Transverse colon (tissue), 4 donors: ENCODE measurements at regions of chr5 and their contacts with region 1.

Region 1: GRCh38 chr5:146049014-146049703 is 56.2 kb downstream of the PLAC8L1 start:
- DNase-seq: peak; percentile 65
- H3K4me3 ChIP-seq: no peak overlapping the region
- H3K27ac ChIP-seq: peak overlapping the region in 2 of 4 donors; percentile 21 to 32
- H3K4me1 ChIP-seq: peaks cover 0 to 27% (median 9%) of the 10 kb centered on the region in 4 donors
- H3K27me3 ChIP-seq: no peaks in the 10 kb centered on the region
- CTCF ChIP-seq: peak; percentile 49 to 74 (median 60)
- EP300 ChIP-seq: no peak
- POLR2A ChIP-seq: no peak

Region 2: GRCh38 chr5:144203750-144204596 is 1845.2 kb before region 1 on chr5:
- in situ Hi-C with region 1: loop called in 2 of 4 experiments (anchors 25 kb)
- intact Hi-C with region 1: loop called (anchors 5 kb)
- DNase-seq: peak; percentile 12
- H3K4me3 ChIP-seq: no peak overlapping the region
- H3K27ac ChIP-seq: no peak overlapping the region
- H3K4me1 ChIP-seq: peaks cover 0 to 10% (median 5%) of the 10 kb centered on the region in 4 donors
- H3K27me3 ChIP-seq: peaks cover 36% of the 10 kb centered on the region
- CTCF ChIP-seq: peak; percentile 79 to 88 (median 81)
- EP300 ChIP-seq: no peak
- POLR2A ChIP-seq: no peak

Region 3: GRCh38 chr5:145681686-145682085 is 367.5 kb before region 1 on chr5:
- in situ Hi-C with region 1: loop called in 2 of 4 experiments (anchors 25 kb)
- intact Hi-C with region 1: no loop called
- DNase-seq: peak; percentile 53
- H3K4me3 ChIP-seq: no peak overlapping the region
- H3K27ac ChIP-seq: peak overlapping the region in 2 of 4 donors; percentile 64 to 72
- H3K4me1 ChIP-seq: peaks cover 0 to 14% (median 7%) of the 10 kb centered on the region in 4 donors
- H3K27me3 ChIP-seq: no peaks in the 10 kb centered on the region
- CTCF ChIP-seq: peak; percentile 56 to 73 (median 61)
- EP300 ChIP-seq: no peak
- POLR2A ChIP-seq: no peak

Region 4: DNA sequence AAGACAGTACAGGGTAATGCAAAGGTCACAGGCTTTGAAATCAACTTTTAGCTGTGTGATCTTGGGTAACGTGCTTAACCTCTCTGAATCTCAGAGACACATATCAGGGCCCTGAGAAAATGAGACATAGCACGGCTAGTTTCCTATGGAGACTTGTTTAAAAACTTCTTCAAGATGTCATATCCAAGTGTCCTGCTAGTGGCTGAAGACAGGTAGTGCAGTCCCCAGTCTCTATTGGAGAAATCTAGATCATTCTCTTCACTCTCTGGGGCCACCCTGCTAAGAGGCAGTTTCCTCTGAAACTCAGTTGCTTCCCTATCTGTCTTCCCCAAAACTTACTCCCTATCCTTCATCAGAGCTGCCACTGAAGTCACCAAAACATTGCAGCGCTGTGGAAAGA is 146.0 kb before region 1 on chr5:
- in situ Hi-C with region 1: loop called in 2 of 4 experiments (anchors 10 to 25 kb)
- intact Hi-C with region 1: no loop called
- DNase-seq: no peak
- H3K4me3 ChIP-seq: no peak overlapping the region
- H3K27ac ChIP-seq: no peak overlapping the region
- H3K4me1 ChIP-seq: no peaks in the 10 kb centered on the region
- H3K27me3 ChIP-seq: no peaks in the 10 kb centered on the region
- CTCF ChIP-seq: peak; percentile 19 to 42 (median 31)
- EP300 ChIP-seq: no peak
- POLR2A ChIP-seq: no peak

Region 5: DNA sequence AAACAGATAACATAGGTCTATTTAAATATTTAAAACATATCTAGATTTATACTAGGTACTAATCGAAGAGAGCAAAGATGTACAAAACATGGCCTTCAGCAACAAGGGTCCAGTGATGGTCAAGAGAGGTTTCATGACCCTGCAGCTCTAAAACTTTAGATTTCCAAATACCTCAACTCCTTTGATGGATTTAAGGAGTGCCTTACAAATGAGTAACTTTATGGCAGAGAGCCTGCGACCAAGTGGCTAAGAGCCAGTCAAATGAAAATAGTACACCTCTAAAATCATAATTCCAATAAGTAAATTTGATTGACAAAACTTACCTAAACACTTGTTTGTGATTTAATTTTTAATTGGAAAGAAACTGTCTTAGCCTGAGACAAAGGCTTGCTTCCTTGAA is 117.4 kb before region 1 on chr5:
- in situ Hi-C with region 1: no loop called
- intact Hi-C with region 1: no loop called
- DNase-seq: no peak
- H3K4me3 ChIP-seq: no peak overlapping the region
- H3K27ac ChIP-seq: no peak overlapping the region
- H3K4me1 ChIP-seq: peaks cover 0 to 13% (median 9%) of the 10 kb centered on the region in 4 donors
- H3K27me3 ChIP-seq: no peaks in the 10 kb centered on the region
- CTCF ChIP-seq: no peak
- EP300 ChIP-seq: no peak
- POLR2A ChIP-seq: no peak

Region 6: DNA sequence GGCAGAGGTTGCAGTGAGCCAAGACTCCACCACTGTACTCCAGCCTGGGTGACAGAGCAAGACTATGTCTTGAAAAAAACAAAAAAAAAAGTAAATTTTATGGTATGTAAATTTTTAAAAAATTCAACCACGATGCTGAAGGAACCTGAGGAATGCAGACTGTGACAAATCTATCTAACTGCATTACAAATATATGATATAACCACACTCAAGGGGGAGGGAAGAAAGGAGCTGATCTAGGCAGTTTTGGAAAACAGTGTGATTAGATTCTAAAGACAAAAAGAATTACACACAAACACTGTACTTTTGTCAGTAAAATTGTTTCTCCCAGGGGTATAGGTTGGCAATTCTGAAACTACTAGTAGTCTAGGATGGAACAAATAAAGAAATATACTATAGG is 116.3 kb after region 1 on chr5:
- in situ Hi-C with region 1: no loop called
- intact Hi-C with region 1: no loop called
- DNase-seq: no peak
- H3K4me3 ChIP-seq: no peak overlapping the region
- H3K27ac ChIP-seq: no peak overlapping the region
- H3K4me1 ChIP-seq: no peaks in the 10 kb centered on the region
- H3K27me3 ChIP-seq: no peaks in the 10 kb centered on the region
- CTCF ChIP-seq: no peak
- EP300 ChIP-seq: no peak
- POLR2A ChIP-seq: no peak